ENCODE measurements at regions of chr1 and their contacts with region 1.

Region 1: GRCh38 chr1:47313915-47314664 is at the start of gene STIL:
- DNase-seq: peak; percentile 99
- total RNA-seq, gene STIL: 0.48 TPM

Region 2: GRCh38 chr1:47333922-47334764 is 20.1 kb after region 1 on chr1:
- intact Hi-C with region 1: loop called (anchors 2 kb)
- DNase-seq: peak; percentile 91

Measured in cardiac septum (tissue), 1 donor.